ENCODE measurements at regions of chr7 and their contacts with region 1.

Region 1: DNA sequence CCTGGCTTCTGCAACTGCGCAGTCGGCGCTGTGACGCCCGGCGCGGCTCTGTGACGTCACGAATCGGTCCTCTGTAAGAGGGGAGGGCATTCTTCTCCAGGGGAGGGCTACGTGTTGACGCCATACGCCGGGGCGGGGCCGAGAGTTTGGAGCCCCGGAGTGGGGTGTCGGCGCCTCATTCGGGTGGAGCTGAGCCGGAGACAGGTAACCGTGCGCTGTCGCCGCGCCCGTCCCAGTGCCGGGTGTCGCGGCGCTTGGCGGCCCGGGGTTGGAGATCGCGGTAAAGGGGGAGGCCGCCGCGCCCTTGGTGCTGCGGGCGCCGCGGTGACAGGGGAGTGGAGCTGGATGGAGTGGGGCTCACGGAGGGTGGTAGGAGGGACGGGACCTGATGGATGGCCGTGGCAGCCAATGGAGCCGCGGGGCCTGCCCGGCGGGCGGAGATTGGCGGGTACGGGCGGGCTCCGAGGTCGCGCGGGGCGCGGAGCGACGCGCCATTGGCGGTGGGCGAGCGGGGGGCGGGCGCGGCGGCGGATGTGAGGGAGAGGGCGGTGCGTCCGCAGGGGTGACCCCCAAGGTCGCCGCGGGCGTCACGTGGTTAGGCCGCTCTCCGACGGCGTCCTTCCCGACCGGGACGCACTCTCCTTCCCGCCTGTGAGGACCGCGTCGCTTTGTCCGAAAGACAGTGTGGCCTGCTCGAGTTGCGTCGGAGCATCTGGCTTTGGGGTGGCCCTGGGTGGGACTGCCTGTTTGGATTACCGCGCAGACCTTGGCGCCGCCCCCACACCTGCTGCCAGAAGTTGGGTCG is at the start of gene OGDH:
- DNase-seq: peak; percentile 100
- ATAC-seq: peak; percentile 91
- H3K4me3 ChIP-seq: peak within 1 kb of the TSS; percentile 80 to 93 (median 85)
- H3K4me3 Mint-ChIP-seq: peak within 1 kb of the TSS; percentile 99
- H3K27ac ChIP-seq: peak within 1 kb of the TSS; percentile 87 to 96
- H3K27ac Mint-ChIP-seq: peak within 1 kb of the TSS; percentile 99
- H3K4me1 ChIP-seq: peaks cover 15 to 34% of the 10 kb centered on the region in 2 donors
- H3K4me1 Mint-ChIP-seq: peaks cover 41% of the 10 kb centered on the region
- H3K27me3 ChIP-seq: no peaks in the 10 kb centered on the region
- H3K27me3 Mint-ChIP-seq: peaks cover 4% of the 10 kb centered on the region
- CTCF ChIP-seq: no peak
- total RNA-seq, gene OGDH: 71.5 and 80.2 TPM in 2 replicates

Region 2: DNA sequence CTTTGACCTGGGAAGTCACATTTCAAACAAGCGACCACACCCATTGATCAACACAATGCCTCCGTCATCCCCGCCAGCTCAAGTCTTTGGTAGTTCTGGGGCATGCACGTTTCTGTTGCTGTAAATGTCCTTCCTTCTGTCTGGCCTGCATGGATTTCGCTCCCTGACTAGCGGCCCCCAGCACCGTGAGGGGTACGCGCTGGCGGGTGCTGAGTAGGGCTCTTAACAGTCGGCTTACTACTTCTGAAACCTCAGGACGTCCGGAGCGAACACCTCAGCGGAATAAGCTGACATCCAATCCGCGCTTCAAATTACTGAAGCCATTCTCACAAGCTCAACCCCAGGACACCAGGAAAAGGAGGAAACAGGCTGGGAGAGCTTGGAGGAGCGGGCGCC is 116.7 kb before region 1 on chr7:
- CTCF ChIA-PET with region 1: no interaction called
- POLR2A ChIA-PET with region 1: no interaction called
- intact Hi-C with region 1: no loop called
- DNase-seq: no peak
- ATAC-seq: peak; percentile 12
- H3K4me3 ChIP-seq: peak overlapping the region; percentile 89 to 98 (median 93)
- H3K4me3 Mint-ChIP-seq: peak overlapping the region; percentile 91
- H3K27ac ChIP-seq: peak overlapping the region; percentile 93 to 94
- H3K27ac Mint-ChIP-seq: peak overlapping the region; percentile 93
- H3K4me1 ChIP-seq: peaks cover 19 to 33% of the 10 kb centered on the region in 2 donors
- H3K4me1 Mint-ChIP-seq: peaks cover 50% of the 10 kb centered on the region
- H3K27me3 ChIP-seq: peaks cover 0 to 6% (median 3%) of the 10 kb centered on the region in 4 experiments
- H3K27me3 Mint-ChIP-seq: peaks cover 3% of the 10 kb centered on the region
- CTCF ChIP-seq: no peak

Region 3: DNA sequence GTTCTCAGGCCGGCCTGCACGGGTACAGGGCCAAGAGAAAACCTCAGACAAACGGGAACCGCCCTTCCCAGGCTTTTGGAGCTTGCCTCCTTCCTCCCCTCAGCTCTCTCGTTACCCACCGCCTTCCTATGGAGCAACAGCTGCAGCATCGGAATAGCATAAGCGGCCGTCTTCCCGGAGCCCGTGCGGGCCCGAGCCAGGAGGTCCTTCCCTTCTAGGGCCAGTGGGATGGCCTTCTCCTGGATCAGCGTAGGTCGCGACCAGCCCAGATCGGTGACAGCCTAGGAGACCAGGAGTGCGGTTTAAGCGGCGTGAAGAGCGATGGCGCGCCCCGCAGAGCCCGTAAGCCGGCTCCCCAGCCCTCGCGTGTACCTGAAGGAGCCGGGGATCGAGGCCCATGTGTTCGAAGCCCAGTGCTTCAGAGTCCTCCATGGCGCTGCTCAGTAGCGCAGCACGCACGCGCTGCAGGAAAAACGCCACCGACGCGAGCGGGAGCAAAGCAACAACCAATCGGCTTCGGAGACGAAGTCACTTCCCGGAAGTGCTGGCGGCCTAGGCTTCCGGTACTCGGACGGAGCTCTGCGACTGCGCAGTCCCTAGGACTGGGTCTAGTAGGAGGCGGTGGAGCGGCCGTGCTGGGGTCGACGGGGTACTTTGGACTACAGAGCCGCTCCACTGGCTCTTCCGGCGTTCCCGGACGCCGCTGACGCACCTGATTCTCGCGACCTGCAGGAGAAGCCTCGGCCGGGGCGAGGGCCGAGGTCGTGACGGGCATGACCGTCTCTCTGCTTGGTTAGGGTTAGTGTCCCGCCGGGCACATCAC is 33.0 kb before region 1 on chr7 and contains the start of gene DDX56:
- CTCF ChIA-PET with region 1: interaction called, 6 read pairs
- POLR2A ChIA-PET with region 1: no interaction called
- intact Hi-C with region 1: loop called (anchors 2 kb)
- DNase-seq: peak; percentile 94
- ATAC-seq: peak; percentile 97
- H3K4me3 ChIP-seq: peak within 1 kb of the TSS; percentile 60 to 94 (median 84)
- H3K4me3 Mint-ChIP-seq: peak within 1 kb of the TSS; percentile 98
- H3K27ac ChIP-seq: peak within 1 kb of the TSS; percentile 84 to 93
- H3K27ac Mint-ChIP-seq: peak within 1 kb of the TSS; percentile 97
- H3K4me1 ChIP-seq: peaks cover 23 to 29% of the 10 kb centered on the region in 2 donors
- H3K4me1 Mint-ChIP-seq: peaks cover 38% of the 10 kb centered on the region
- H3K27me3 ChIP-seq: no peaks in the 10 kb centered on the region
- H3K27me3 Mint-ChIP-seq: no peaks in the 10 kb centered on the region
- CTCF ChIP-seq: no peak
- total RNA-seq, gene DDX56: 102 and 104 TPM in 2 replicates

Region 4: DNA sequence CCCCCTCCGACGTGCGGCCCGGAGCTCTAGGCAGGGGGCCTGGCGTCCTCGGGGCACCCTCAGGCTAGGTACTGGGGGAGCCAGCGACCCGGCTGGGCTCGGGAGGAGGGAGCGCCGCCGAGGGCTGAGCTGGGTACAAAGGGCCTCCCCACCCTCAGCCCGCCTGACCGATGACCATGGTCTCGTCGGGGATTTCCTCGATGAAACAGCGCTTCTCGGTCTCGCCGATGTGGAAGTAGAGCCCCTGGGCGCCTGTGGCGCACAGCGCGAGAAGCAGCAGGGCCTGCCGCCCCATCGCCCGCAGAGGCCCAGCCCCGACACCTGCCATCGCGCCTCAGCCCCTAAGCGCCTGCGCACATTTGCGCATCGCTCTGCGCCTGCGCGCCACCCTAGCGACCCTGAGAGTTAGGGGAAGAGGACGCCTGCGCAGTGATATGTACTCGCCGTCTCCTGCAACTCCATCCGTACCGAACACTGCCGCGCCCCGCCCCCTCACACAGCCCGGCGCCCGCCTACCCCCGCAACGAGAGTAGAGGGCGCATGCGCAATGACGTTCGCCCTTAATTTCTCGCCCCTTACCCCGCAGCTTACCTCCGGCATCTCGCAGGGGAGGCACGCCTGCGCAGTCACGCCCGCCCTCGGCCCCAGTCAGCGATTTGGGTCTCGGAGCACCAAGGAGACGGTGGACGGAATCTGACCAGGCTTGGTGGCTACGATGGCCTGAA is 24.6 kb before region 1 on chr7 and contains the start of gene TMED4:
- CTCF ChIA-PET with region 1: no interaction called
- POLR2A ChIA-PET with region 1: interaction called, 12 read pairs
- intact Hi-C with region 1: loop called (anchors 1 kb)
- DNase-seq: peak; percentile 100
- ATAC-seq: peak; percentile 92
- H3K4me3 ChIP-seq: peak within 1 kb of the TSS; percentile 72 to 99 (median 88)
- H3K4me3 Mint-ChIP-seq: peak within 1 kb of the TSS; percentile 96
- H3K27ac ChIP-seq: peak within 1 kb of the TSS; percentile 92 to 97
- H3K27ac Mint-ChIP-seq: peak within 1 kb of the TSS; percentile 99
- H3K4me1 ChIP-seq: peaks cover 21% of the 10 kb centered on the region in 2 donors
- H3K4me1 Mint-ChIP-seq: peaks cover 28% of the 10 kb centered on the region
- H3K27me3 ChIP-seq: no peaks in the 10 kb centered on the region
- H3K27me3 Mint-ChIP-seq: no peaks in the 10 kb centered on the region
- CTCF ChIP-seq: no peak
- total RNA-seq, gene TMED4: 84.0 and 84.1 TPM in 2 replicates

Region 5: GRCh38 chr7:44633254-44634186 is 26.9 kb after region 1 on chr7:
- CTCF ChIA-PET with region 1: interaction called, 25 read pairs
- POLR2A ChIA-PET with region 1: interaction called, 27 read pairs
- intact Hi-C with region 1: loop called (anchors 1 kb)
- DNase-seq: peak; percentile 86
- ATAC-seq: peak; percentile 65
- H3K4me3 ChIP-seq: no peak overlapping the region
- H3K4me3 Mint-ChIP-seq: peak overlapping the region; percentile 63
- H3K27ac ChIP-seq: peak overlapping the region; percentile 93 to 95
- H3K27ac Mint-ChIP-seq: peak overlapping the region; percentile 97
- H3K4me1 ChIP-seq: peaks cover 75 to 100% of the 10 kb centered on the region in 2 donors
- H3K4me1 Mint-ChIP-seq: peaks cover 85% of the 10 kb centered on the region
- H3K27me3 ChIP-seq: no peaks in the 10 kb centered on the region
- H3K27me3 Mint-ChIP-seq: no peaks in the 10 kb centered on the region
- CTCF ChIP-seq: no peak

Region 6: GRCh38 chr7:44638611-44639557 is 32.2 kb after region 1 on chr7:
- CTCF ChIA-PET with region 1: interaction called, 25 read pairs
- POLR2A ChIA-PET with region 1: interaction called, 27 read pairs
- intact Hi-C with region 1: loop called (anchors 1 kb)
- DNase-seq: peak; percentile 72
- ATAC-seq: peak; percentile 87
- H3K4me3 ChIP-seq: peak overlapping the region in 1 of 5 experiments; percentile 31
- H3K4me3 Mint-ChIP-seq: peak overlapping the region; percentile 84
- H3K27ac ChIP-seq: peak overlapping the region; percentile 83 to 93
- H3K27ac Mint-ChIP-seq: peak overlapping the region; percentile 99
- H3K4me1 ChIP-seq: peaks cover 44 to 69% of the 10 kb centered on the region in 2 donors
- H3K4me1 Mint-ChIP-seq: peaks cover 59% of the 10 kb centered on the region
- H3K27me3 ChIP-seq: no peaks in the 10 kb centered on the region
- H3K27me3 Mint-ChIP-seq: no peaks in the 10 kb centered on the region
- CTCF ChIP-seq: no peak

Region 7: GRCh38 chr7:44673324-44673723 is 66.7 kb after region 1 on chr7:
- CTCF ChIA-PET with region 1: no interaction called
- POLR2A ChIA-PET with region 1: interaction called, 10 read pairs
- intact Hi-C with region 1: no loop called
- DNase-seq: no peak
- ATAC-seq: no peak
- H3K4me3 ChIP-seq: no peak overlapping the region
- H3K4me3 Mint-ChIP-seq: no peak overlapping the region
- H3K27ac ChIP-seq: no peak overlapping the region
- H3K27ac Mint-ChIP-seq: no peak overlapping the region
- H3K4me1 ChIP-seq: no peaks in the 10 kb centered on the region
- H3K4me1 Mint-ChIP-seq: no peaks in the 10 kb centered on the region
- H3K27me3 ChIP-seq: no peaks in the 10 kb centered on the region
- H3K27me3 Mint-ChIP-seq: no peaks in the 10 kb centered on the region
- CTCF ChIP-seq: no peak

Region 8: GRCh38 chr7:45111298-45112223 is 504.9 kb after region 1 on chr7 and contains the start of gene TBRG4:
- CTCF ChIA-PET with region 1: no interaction called
- POLR2A ChIA-PET with region 1: no interaction called
- intact Hi-C with region 1: loop called (anchors 1 kb)
- DNase-seq: peak; percentile 96
- ATAC-seq: peak; percentile 94
- H3K4me3 ChIP-seq: peak within 1 kb of the TSS; percentile 67 to 93 (median 72)
- H3K4me3 Mint-ChIP-seq: peak within 1 kb of the TSS; percentile 91
- H3K27ac ChIP-seq: peak within 1 kb of the TSS; percentile 91 to 98
- H3K27ac Mint-ChIP-seq: peak within 1 kb of the TSS; percentile 95
- H3K4me1 ChIP-seq: peaks cover 22 to 38% of the 10 kb centered on the region in 2 donors
- H3K4me1 Mint-ChIP-seq: peaks cover 40% of the 10 kb centered on the region
- H3K27me3 ChIP-seq: no peaks in the 10 kb centered on the region
- H3K27me3 Mint-ChIP-seq: no peaks in the 10 kb centered on the region
- CTCF ChIP-seq: no peak
- total RNA-seq, gene TBRG4: 111 and 116 TPM in 2 replicates